CD4-positive, alpha-beta memory T cell (primary cell): ENCODE measurements at regions of chr1 and their contacts with region 1.

Region 1: GRCh38 chr1:154479764-154480421 is 22.1 kb upstream of the TDRD10 start:
- DNase-seq: peak in 4 of 5 donors; percentile 62 to 77 (median 66)
- H3K4me3 ChIP-seq: no peak overlapping the region
- H3K4me3 Mint-ChIP-seq: no peak overlapping the region
- H3K27ac ChIP-seq: no peak overlapping the region
- H3K27ac Mint-ChIP-seq: peak overlapping the region in 1 of 7 donors; percentile 9
- H3K4me1 ChIP-seq: peaks cover 16% of the 10 kb centered on the region
- H3K4me1 Mint-ChIP-seq: peaks cover 8 to 17% (median 12%) of the 10 kb centered on the region in 4 donors
- H3K27me3 ChIP-seq: no peaks in the 10 kb centered on the region
- H3K27me3 Mint-ChIP-seq: peaks cover 0 to 2% of the 10 kb centered on the region in 2 donors

Region 2: DNA sequence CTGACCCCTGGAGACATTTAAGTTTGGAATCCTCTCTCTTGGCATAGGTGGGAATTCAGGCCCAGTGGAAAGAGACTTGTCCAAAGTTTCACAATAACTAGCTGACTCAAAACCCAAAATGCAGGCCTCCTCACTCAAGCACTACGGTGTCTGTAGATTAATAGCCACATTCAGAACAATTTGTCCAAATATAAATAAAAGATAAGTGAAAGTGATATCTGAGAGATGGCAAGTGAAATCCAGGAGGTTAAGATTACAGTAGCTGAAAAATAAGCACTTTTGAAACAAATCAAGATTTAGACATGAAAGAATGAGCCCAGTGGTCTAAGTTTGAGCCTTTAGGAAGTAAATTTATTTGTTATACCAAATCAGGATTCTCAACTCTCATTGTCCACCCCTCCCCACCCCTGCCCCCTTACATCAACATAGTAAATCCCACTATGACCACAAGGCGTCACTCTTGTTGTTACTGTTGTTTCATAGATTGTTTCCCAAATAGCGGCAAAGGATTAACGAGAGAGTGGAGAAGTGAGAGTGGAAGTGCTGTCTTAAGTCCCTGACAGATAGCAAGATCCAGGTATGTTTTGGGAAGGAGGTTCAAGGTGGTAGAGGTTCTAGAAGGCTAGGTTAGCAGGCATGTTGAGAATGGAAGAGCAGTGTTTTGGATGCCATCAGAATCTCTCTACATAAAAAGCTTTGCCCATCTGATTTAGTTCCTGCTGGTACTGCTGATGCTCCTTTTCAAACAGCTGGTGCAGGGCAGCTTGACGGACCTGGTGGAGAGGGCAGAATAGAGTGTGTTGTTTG is 280.9 kb before region 1 on chr1:
- CTCF ChIA-PET with region 1: interaction called, 3 read pairs
- POLR2A ChIA-PET with region 1: no interaction called
- intact Hi-C with region 1: loop called (anchors 2 kb)
- DNase-seq: peak; percentile 53 to 62 (median 58)
- H3K4me3 ChIP-seq: no peak overlapping the region
- H3K4me3 Mint-ChIP-seq: no peak overlapping the region
- H3K27ac ChIP-seq: no peak overlapping the region
- H3K27ac Mint-ChIP-seq: peak overlapping the region in 2 of 7 donors; percentile 64 to 74
- H3K4me1 ChIP-seq: peaks cover 7% of the 10 kb centered on the region
- H3K4me1 Mint-ChIP-seq: no peaks in the 10 kb centered on the region
- H3K27me3 ChIP-seq: no peaks in the 10 kb centered on the region
- H3K27me3 Mint-ChIP-seq: peaks cover 0 to 3% of the 10 kb centered on the region in 2 donors

Region 3: GRCh38 chr1:154404984-154405761 is 74.7 kb before region 1 on chr1 and contains the start of gene IL6R:
- CTCF ChIA-PET with region 1: interaction called, 10 read pairs
- POLR2A ChIA-PET with region 1: interaction called, 13 read pairs
- intact Hi-C with region 1: loop called (anchors 1 kb)
- DNase-seq: peak; percentile 80 to 85 (median 82)
- H3K4me3 ChIP-seq: peak within 1 kb of the TSS; percentile 71 to 84
- H3K4me3 Mint-ChIP-seq: peak within 1 kb of the TSS; percentile 93 to 99 (median 97)
- H3K27ac ChIP-seq: peak within 1 kb of the TSS; percentile 68
- H3K27ac Mint-ChIP-seq: peak within 1 kb of the TSS; percentile 92 to 97 (median 96)
- H3K4me1 ChIP-seq: peaks cover 73% of the 10 kb centered on the region
- H3K4me1 Mint-ChIP-seq: peaks cover 43 to 86% (median 64%) of the 10 kb centered on the region in 4 donors
- H3K27me3 ChIP-seq: no peaks in the 10 kb centered on the region
- H3K27me3 Mint-ChIP-seq: no peaks in the 10 kb centered on the region
- total RNA-seq, gene IL6R: 101 to 106 TPM

Region 4: DNA sequence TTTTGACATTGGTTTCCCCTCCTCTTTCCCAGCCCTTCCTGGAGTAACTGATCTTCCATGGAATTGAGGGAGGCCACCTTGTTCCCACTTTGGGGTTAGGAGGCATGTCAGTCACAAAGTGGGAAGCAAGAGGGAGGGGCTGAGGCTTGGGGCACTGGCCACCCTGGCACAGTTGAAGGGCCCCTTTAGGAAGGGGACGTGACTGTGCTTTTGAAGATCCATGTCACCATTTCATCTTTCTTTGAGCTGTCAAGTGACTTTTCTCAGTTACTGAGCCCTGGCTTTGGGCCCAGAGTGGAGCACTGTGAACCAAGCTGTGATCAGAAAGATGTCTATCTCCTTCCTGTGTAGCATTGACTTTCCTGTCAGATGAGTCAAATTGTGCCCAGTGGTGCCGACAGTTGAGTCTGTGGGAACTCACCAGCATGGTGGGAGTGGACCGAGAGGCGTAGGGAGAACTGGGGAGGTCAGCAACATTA is 16.3 kb before region 1 on chr1:
- CTCF ChIA-PET with region 1: interaction called, 12 read pairs
- POLR2A ChIA-PET with region 1: interaction called, 7 read pairs
- intact Hi-C with region 1: loop called (anchors 1 kb)
- DNase-seq: peak; percentile 74 to 88 (median 77)
- H3K4me3 ChIP-seq: no peak overlapping the region
- H3K4me3 Mint-ChIP-seq: peak overlapping the region; percentile 76 to 93 (median 86)
- H3K27ac ChIP-seq: peak overlapping the region; percentile 66
- H3K27ac Mint-ChIP-seq: peak overlapping the region; percentile 94 to 100 (median 98)
- H3K4me1 ChIP-seq: peaks cover 98% of the 10 kb centered on the region
- H3K4me1 Mint-ChIP-seq: peaks cover 57 to 92% (median 79%) of the 10 kb centered on the region in 4 donors
- H3K27me3 ChIP-seq: no peaks in the 10 kb centered on the region
- H3K27me3 Mint-ChIP-seq: no peaks in the 10 kb centered on the region

Region 5: GRCh38 chr1:154669464-154670282 is 189.8 kb after region 1 on chr1:
- CTCF ChIA-PET with region 1: interaction called, 4 read pairs
- POLR2A ChIA-PET with region 1: no interaction called
- intact Hi-C with region 1: loop called (anchors 1 kb)
- DNase-seq: peak; percentile 65 to 73 (median 68)
- H3K4me3 ChIP-seq: no peak overlapping the region
- H3K4me3 Mint-ChIP-seq: no peak overlapping the region
- H3K27ac ChIP-seq: no peak overlapping the region
- H3K27ac Mint-ChIP-seq: no peak overlapping the region
- H3K4me1 ChIP-seq: no peaks in the 10 kb centered on the region
- H3K4me1 Mint-ChIP-seq: no peaks in the 10 kb centered on the region
- H3K27me3 ChIP-seq: no peaks in the 10 kb centered on the region
- H3K27me3 Mint-ChIP-seq: peaks cover 2% of the 10 kb centered on the region in 2 donors

Region 6: GRCh38 chr1:154936555-154937084 is 456.7 kb after region 1 on chr1 and contains the start of gene PMVK:
- CTCF ChIA-PET with region 1: no interaction called
- POLR2A ChIA-PET with region 1: no interaction called
- intact Hi-C with region 1: loop called (anchors 5 kb)
- DNase-seq: peak; percentile 98 to 99 (median 98)
- H3K4me3 ChIP-seq: peak within 1 kb of the TSS; percentile 51 to 93
- H3K4me3 Mint-ChIP-seq: peak within 1 kb of the TSS; percentile 93 to 99 (median 97)
- H3K27ac ChIP-seq: peak within 1 kb of the TSS; percentile 96
- H3K27ac Mint-ChIP-seq: peak within 1 kb of the TSS; percentile 97 to 100 (median 99)
- H3K4me1 ChIP-seq: peaks cover 54% of the 10 kb centered on the region
- H3K4me1 Mint-ChIP-seq: peaks cover 36 to 70% (median 58%) of the 10 kb centered on the region in 4 donors
- H3K27me3 ChIP-seq: no peaks in the 10 kb centered on the region
- H3K27me3 Mint-ChIP-seq: no peaks in the 10 kb centered on the region
- total RNA-seq, gene PMVK: 17.6 to 21.2 TPM